ENCODE measurements at regions of chr17 and their contacts with region 1.

Region 1: GRCh38 chr17:27848931-27849330 is 44.2 kb downstream of the LYRM9 start:
- DNase-seq: no peak
- ATAC-seq: no peak
- H3K4me3 ChIP-seq: no peak overlapping the region
- H3K27ac ChIP-seq: no peak overlapping the region
- H3K4me1 ChIP-seq: no peaks in the 10 kb centered on the region
- H3K27me3 ChIP-seq: no peaks in the 10 kb centered on the region
- CTCF ChIP-seq: no peak

Region 2: DNA sequence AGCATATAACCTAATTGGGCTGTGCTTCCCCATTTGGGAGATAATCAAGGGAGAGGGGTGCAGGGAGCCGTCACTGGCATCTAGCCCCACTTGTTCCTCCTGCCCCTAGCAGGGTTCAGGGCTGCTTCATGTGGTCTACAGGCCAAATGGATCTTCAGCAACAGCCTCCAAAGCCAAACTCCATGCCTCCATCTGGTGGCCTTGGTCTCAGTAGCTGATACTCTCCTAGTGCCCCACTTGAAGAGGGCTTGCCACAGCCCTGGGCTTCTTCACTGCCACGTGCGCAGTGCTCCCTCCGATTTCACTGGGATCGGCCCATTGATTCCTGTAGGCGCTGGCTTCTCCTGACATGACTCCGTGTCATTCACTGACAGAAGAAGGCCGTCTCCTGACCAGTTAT is 19.6 kb after region 1 on chr17:
- intact Hi-C with region 1: loop called in 1 of 10 experiments (anchors 2 kb)
- DNase-seq: no peak
- ATAC-seq: no peak
- H3K4me3 ChIP-seq: no peak overlapping the region
- H3K27ac ChIP-seq: no peak overlapping the region
- H3K4me1 ChIP-seq: no peaks in the 10 kb centered on the region
- H3K27me3 ChIP-seq: no peaks in the 10 kb centered on the region
- CTCF ChIP-seq: no peak

Measured in heart right ventricle (tissue), 16 donors.